ENCODE measurements at regions of chr4 and their contacts with region 1.

Region 1: GRCh38 chr4:84451546-84451945 is 47.5 kb downstream of the NKX6-1 start:
- DNase-seq: peak; percentile 4
- H3K4me3 ChIP-seq: no peak overlapping the region
- H3K27ac ChIP-seq: no peak overlapping the region
- H3K4me1 ChIP-seq: no peaks in the 10 kb centered on the region
- H3K27me3 ChIP-seq: peaks cover 0 to 2% of the 10 kb centered on the region in 2 experiments
- CTCF ChIP-seq: peak; percentile 17 to 24
- POLR2A ChIP-seq: no peak

Region 2: DNA sequence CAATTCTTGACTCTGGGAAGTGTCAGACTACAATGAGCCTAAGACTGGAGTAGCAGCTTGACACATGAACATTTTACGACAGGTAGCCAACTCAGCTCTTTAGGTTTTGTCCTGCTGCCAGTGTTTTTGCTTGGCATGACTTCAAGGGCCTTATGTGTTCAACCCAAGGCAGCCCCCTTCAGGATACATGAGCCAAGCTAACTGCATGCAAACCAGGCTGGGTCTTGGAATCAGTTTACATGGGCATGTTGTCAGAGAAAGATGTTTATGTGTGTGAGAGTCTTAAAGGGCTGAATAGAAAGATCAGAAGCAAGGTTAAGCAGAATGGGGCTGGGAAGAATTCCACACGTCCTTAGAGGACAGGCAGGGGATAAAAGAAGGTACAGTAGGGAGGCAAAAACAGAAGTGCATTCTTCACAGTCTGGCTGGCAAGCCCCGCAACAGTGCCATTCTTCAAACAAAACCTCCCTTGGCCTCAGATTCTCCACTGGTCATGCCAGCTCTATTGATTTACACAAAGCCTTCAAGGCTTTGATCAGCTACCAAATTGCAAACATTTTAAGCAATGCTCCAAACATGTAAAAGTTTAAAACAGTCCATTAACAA is 49.7 kb before region 1 on chr4:
- CTCF ChIA-PET with region 1: no interaction called
- POLR2A ChIA-PET with region 1: no interaction called
- dilution Hi-C with region 1: no loop called
- intact Hi-C with region 1: no loop called
- DNase-seq: no peak
- H3K4me3 ChIP-seq: no peak overlapping the region
- H3K27ac ChIP-seq: no peak overlapping the region
- H3K4me1 ChIP-seq: no peaks in the 10 kb centered on the region
- H3K27me3 ChIP-seq: no peaks in the 10 kb centered on the region
- CTCF ChIP-seq: no peak
- POLR2A ChIP-seq: no peak

Region 3: GRCh38 chr4:84467601-84468000 is 16.1 kb after region 1 on chr4:
- CTCF ChIA-PET with region 1: interaction called, 20 read pairs
- POLR2A ChIA-PET with region 1: no interaction called
- dilution Hi-C with region 1: no loop called
- intact Hi-C with region 1: no loop called
- DNase-seq: no peak
- H3K4me3 ChIP-seq: no peak overlapping the region
- H3K27ac ChIP-seq: no peak overlapping the region
- H3K4me1 ChIP-seq: no peaks in the 10 kb centered on the region
- H3K27me3 ChIP-seq: peaks cover 0 to 2% of the 10 kb centered on the region in 2 experiments
- CTCF ChIP-seq: no peak
- POLR2A ChIP-seq: no peak

Region 4: GRCh38 chr4:84474107-84474506 is 22.6 kb after region 1 on chr4:
- CTCF ChIA-PET with region 1: interaction called, 20 read pairs
- POLR2A ChIA-PET with region 1: no interaction called
- dilution Hi-C with region 1: no loop called
- intact Hi-C with region 1: no loop called
- DNase-seq: no peak
- H3K4me3 ChIP-seq: no peak overlapping the region
- H3K27ac ChIP-seq: no peak overlapping the region
- H3K4me1 ChIP-seq: no peaks in the 10 kb centered on the region
- H3K27me3 ChIP-seq: peaks cover 2 to 21% of the 10 kb centered on the region in 2 experiments
- CTCF ChIP-seq: no peak
- POLR2A ChIP-seq: no peak